WTC11 (cell line): ENCODE measurements at regions of chr14 and their contacts with region 1.

Region 1: GRCh38 chr14:23555882-23556699 is at the start of gene THTPA:
- DNase-seq: peak; percentile 98
- ATAC-seq: peak; percentile 62
- H3K4me3 Mint-ChIP-seq: peak within 1 kb of the TSS; percentile 86
- H3K27ac Mint-ChIP-seq: peak within 1 kb of the TSS; percentile 82
- H3K4me1 Mint-ChIP-seq: peaks cover 41% of the 10 kb centered on the region
- H3K27me3 Mint-ChIP-seq: no peaks in the 10 kb centered on the region; the same call in 1 of the 2 replicates
- CTCF ChIP-seq: no peak
- total RNA-seq, gene THTPA: 20.0 to 26.2 TPM (median 25.4 TPM) in 3 replicates

Region 2: DNA sequence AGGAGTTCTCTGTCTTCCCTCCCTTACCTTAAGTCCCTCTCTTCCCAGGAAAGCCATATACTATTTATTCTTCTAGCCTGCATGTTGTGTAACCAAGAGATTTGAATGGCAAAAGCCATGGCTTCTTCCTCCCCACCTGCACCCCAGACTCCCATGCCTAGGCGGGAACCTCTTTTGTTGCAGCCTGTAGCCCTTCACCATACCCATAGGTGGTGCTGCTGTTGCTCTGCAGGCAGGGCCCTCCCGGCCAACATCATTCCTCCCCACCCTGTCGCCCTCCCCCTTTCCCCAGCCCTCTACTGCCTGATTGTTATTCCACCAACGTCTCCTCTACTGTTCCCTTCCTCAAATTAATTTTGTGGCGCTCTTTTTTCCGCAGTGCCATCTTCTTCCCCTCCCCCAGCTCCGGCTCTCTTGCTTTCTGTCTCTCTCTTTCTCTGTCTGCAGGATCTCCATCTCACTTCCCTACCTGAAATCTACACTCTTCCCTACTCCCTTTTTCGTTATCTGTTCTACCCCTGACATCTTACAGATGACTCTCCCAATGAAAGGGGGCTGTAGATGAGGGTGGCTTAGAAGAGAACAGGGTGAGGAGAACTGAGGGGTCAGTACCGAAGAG is 72.7 kb before region 1 on chr14:
- CTCF ChIA-PET with region 1: interaction called, 377 read pairs
- POLR2A ChIA-PET with region 1: interaction called, 9 read pairs
- DNase-seq: peak; percentile 87
- ATAC-seq: peak; percentile 87
- H3K4me3 Mint-ChIP-seq: peak overlapping the region; percentile 55
- H3K27ac Mint-ChIP-seq: peak overlapping the region; percentile 97
- H3K4me1 Mint-ChIP-seq: peaks cover 65% of the 10 kb centered on the region
- H3K27me3 Mint-ChIP-seq: no peaks in the 10 kb centered on the region; the same call in 1 of the 2 replicates
- CTCF ChIP-seq: peak; percentile 72

Region 3: DNA sequence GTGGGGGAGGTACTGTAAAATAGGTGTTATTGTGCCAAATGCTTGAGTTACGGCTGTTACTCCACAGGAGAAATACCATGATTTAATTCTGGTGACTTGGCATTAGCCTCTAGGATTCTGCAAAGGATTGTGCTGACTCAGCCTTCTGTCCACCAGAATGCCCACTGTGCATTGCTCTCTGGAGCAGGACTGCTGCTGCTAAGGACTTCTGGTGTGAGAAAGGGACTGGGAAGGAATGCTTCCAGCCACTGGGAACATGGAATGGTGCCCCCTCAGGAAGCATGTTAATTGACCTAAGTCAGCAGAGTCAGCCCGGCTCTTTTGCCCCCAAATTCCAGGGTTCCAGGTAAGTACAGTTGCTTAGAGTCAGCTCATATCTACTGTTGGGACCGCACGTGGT is 37.4 kb before region 1 on chr14:
- CTCF ChIA-PET with region 1: interaction called, 44 read pairs
- POLR2A ChIA-PET with region 1: no interaction called
- DNase-seq: no peak
- ATAC-seq: peak; percentile 66
- H3K4me3 Mint-ChIP-seq: no peak overlapping the region
- H3K27ac Mint-ChIP-seq: no peak overlapping the region
- H3K4me1 Mint-ChIP-seq: peaks cover 55% of the 10 kb centered on the region
- H3K27me3 Mint-ChIP-seq: peaks cover 38% of the 10 kb centered on the region
- CTCF ChIP-seq: no peak

Region 4: GRCh38 chr14:23539248-23540140 is 16.6 kb before region 1 on chr14:
- CTCF ChIA-PET with region 1: interaction called, 101 read pairs
- POLR2A ChIA-PET with region 1: interaction called, 102 read pairs
- DNase-seq: peak; percentile 77
- ATAC-seq: peak; percentile 22
- H3K4me3 Mint-ChIP-seq: peak overlapping the region; percentile 83
- H3K27ac Mint-ChIP-seq: peak overlapping the region; percentile 100
- H3K4me1 Mint-ChIP-seq: peaks cover 57% of the 10 kb centered on the region
- H3K27me3 Mint-ChIP-seq: no peaks in the 10 kb centered on the region
- CTCF ChIP-seq: peak; percentile 83

Region 5: GRCh38 chr14:23567192-23568020 is 11.3 kb after region 1 on chr14 and contains the start of gene AP1G2:
- CTCF ChIA-PET with region 1: interaction called, 16 read pairs
- POLR2A ChIA-PET with region 1: interaction called, 5 read pairs
- DNase-seq: peak; percentile 88
- ATAC-seq: peak; percentile 73
- H3K4me3 Mint-ChIP-seq: peak within 1 kb of the TSS; percentile 98
- H3K27ac Mint-ChIP-seq: peak within 1 kb of the TSS; percentile 93
- H3K4me1 Mint-ChIP-seq: peaks cover 38% of the 10 kb centered on the region
- H3K27me3 Mint-ChIP-seq: peaks cover 2% of the 10 kb centered on the region; the same call in 1 of the 2 replicates
- CTCF ChIP-seq: no peak
- total RNA-seq, gene AP1G2: 108 to 122 TPM (median 115 TPM) in 3 replicates